ENCODE measurements at regions of chr4 and their contacts with region 1.

Region 1: DNA sequence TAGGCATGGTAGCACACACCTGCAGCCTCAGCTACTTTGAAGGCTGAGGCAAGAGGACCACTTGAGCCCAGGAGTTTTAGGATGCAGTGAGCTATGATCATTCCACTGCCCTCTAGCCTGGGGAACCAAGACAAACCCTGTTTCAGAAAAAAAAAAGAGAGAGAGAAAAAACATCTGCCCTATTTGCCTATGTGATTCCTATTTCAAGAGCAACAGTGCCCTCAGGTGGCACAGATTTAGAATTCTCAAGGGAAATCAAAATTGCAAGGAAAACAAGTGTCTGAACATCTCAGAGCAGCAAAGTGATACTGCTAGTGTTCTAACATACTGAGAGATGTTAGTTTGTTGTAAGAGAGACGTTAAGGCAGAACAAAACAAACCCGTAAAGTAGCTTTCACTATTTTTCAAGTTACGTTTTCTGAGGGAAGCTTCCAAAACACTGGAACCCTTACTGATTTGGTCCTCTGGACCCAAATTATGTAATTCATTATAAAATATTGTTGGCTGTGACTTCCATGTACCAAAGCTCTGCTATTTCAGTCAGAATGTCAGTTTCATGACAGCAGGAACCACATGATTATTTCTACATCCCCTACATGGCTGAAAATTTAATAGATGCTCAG is 7.9 kb downstream of the BDH2 start:
- DNase-seq: peak; percentile 80 to 91 (median 83)
- H3K4me3 ChIP-seq: no peak overlapping the region
- H3K27ac ChIP-seq: no peak overlapping the region
- H3K4me1 ChIP-seq: peaks cover 0 to 8% (median 0%) of the 10 kb centered on the region in 4 experiments
- H3K27me3 ChIP-seq: no peaks in the 10 kb centered on the region

Region 2: DNA sequence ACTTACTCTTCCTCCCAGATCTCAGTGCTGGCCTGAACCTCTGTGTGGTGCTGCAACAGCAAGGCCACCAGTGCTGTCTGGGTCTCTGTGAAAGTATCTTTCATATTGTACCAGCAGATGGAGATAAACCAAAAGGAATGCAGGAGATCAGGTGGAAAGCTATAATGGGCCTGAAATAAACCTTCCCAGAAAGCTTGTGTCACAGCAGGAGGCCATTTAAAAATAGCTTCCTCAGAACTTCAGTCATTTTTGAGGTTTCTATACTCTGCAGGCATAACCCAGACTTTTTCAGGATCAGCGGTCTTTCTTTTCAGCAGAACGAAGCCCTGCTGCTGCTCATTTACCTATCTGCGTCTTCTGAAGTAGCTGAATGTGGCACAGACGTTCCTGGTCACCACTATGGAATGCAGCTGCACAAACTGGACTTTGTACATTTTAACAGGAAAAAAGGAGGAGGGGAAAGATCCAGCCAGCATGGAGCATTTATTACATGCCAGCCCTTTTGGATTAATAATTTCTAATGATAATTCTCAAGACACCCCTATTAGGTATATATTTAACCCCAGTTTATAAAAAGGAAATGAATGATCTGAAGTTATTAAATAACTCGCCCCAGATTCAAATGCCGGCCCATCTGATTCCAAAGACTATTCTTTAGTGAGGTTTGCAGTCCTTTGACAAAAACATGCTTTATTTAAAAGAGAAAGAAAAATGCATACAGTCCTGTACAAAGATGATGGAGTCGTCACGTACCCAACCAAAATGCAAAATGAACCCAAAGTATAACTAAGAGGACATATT is 470.8 kb before region 1 on chr4:
- CTCF ChIA-PET with region 1: interaction called, 87 read pairs
- POLR2A ChIA-PET with region 1: no interaction called
- DNase-seq: peak; percentile 65 to 77 (median 77)
- H3K4me3 ChIP-seq: no peak overlapping the region
- H3K27ac ChIP-seq: no peak overlapping the region
- H3K4me1 ChIP-seq: peaks cover 0 to 9% (median 5%) of the 10 kb centered on the region in 4 experiments
- H3K27me3 ChIP-seq: no peaks in the 10 kb centered on the region

Region 3: DNA sequence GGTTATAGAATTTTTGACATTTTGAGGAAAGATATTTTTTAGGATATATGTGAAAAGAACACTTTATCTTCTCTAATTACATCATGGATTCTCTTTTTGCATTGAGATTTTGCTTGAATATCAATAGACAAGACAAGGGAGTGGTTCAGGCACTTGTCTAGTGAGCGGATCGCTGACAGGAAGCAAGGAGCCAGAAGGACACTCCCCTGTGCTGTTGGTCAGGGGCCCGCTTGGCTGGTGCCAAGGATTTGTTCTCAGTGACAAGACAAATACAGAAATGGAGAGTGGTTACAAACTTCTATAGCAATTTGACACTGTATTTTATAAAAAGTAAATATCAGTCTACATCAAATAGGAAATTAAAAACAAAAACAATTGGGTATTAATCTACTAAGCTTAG is 132.2 kb before region 1 on chr4:
- CTCF ChIA-PET with region 1: no interaction called
- POLR2A ChIA-PET with region 1: no interaction called
- DNase-seq: peak in 1 of 3 donors; percentile 3
- H3K4me3 ChIP-seq: no peak overlapping the region
- H3K27ac ChIP-seq: no peak overlapping the region
- H3K4me1 ChIP-seq: no peaks in the 10 kb centered on the region
- H3K27me3 ChIP-seq: no peaks in the 10 kb centered on the region

Region 4: DNA sequence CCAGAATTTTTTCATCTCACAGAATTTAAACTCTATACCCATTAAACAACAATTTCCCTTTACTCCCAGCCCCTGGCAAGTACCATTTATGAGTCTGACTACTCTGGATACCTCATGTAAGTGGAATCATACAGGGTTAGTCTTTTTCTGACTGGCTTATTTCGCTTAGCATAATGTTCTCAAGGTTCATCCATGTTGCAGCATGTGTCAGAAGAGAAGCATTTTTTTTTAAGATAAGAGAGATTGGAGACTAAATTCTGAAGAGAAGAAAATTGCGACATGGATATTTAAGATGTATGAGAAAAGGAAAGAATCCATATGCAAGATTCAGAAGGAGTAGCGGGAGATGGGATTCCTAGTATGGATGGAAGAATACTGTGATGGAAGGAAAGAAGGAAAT is 60.9 kb before region 1 on chr4:
- CTCF ChIA-PET with region 1: interaction called, 10 read pairs
- POLR2A ChIA-PET with region 1: no interaction called
- DNase-seq: no peak
- H3K4me3 ChIP-seq: no peak overlapping the region
- H3K27ac ChIP-seq: no peak overlapping the region
- H3K4me1 ChIP-seq: no peaks in the 10 kb centered on the region
- H3K27me3 ChIP-seq: no peaks in the 10 kb centered on the region

Region 5: DNA sequence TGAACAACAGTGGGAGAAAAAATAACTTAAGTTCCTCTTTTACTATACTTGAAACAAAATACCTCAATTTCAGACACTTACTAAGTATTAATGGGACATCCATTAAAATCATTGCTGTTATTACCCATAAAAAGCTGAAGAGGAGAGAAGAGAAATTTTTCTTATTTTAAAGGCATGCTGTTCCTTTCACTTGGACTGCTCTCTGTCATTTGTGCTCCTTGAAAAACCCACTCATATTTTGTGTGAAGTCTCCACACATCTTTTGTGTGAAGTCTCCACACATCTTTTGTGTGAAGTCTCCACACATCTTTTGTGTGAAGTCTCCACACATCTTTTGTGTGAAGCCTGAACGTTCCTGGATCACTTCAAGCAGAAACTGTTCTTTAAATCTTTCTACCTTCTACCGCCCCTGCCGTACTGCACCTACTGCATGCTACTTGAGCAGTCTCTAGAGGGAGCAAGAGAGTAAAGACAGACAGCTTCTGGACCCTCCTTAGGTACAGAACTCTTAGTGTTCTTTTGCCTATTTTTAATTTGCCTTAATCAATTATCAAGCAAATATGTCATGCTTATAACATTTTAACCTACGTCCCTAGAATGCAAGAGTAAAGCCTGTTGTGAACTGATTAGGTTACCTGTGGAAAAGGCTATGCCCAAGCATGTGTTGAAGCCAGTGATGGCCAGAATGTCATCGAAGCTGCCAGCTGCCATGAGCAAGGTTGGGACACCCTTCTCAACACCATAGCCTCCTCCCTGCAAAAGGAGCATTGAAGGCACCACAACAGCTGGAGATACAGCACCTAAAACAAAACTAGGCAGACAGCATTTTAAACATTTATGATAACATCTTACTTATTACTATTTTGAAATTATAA is 45.1 kb before region 1 on chr4:
- CTCF ChIA-PET with region 1: interaction called, 50 read pairs
- POLR2A ChIA-PET with region 1: no interaction called
- DNase-seq: peak; percentile 45 to 76 (median 73)
- H3K4me3 ChIP-seq: no peak overlapping the region
- H3K27ac ChIP-seq: no peak overlapping the region
- H3K4me1 ChIP-seq: no peaks in the 10 kb centered on the region
- H3K27me3 ChIP-seq: no peaks in the 10 kb centered on the region

Region 6: GRCh38 chr4:103075901-103076739 is 15.6 kb before region 1 on chr4:
- CTCF ChIA-PET with region 1: interaction called, 35 read pairs
- POLR2A ChIA-PET with region 1: no interaction called
- DNase-seq: peak; percentile 50 to 84 (median 75)
- H3K4me3 ChIP-seq: peak overlapping the region; percentile 44 to 84 (median 79)
- H3K27ac ChIP-seq: peak overlapping the region; percentile 73 to 94
- H3K4me1 ChIP-seq: peaks cover 0 to 38% (median 22%) of the 10 kb centered on the region in 4 experiments
- H3K27me3 ChIP-seq: no peaks in the 10 kb centered on the region

Region 7: GRCh38 chr4:103118166-103118565 is 26.5 kb after region 1 on chr4:
- CTCF ChIA-PET with region 1: no interaction called
- POLR2A ChIA-PET with region 1: no interaction called
- DNase-seq: no peak
- H3K4me3 ChIP-seq: no peak overlapping the region
- H3K27ac ChIP-seq: no peak overlapping the region
- H3K4me1 ChIP-seq: no peaks in the 10 kb centered on the region
- H3K27me3 ChIP-seq: no peaks in the 10 kb centered on the region

Measured in common myeloid progenitor, CD34-positive (primary cell).